Breast epithelium (tissue), 4 donors: ENCODE measurements at regions of chr3 and their contacts with region 1.

Region 1: DNA sequence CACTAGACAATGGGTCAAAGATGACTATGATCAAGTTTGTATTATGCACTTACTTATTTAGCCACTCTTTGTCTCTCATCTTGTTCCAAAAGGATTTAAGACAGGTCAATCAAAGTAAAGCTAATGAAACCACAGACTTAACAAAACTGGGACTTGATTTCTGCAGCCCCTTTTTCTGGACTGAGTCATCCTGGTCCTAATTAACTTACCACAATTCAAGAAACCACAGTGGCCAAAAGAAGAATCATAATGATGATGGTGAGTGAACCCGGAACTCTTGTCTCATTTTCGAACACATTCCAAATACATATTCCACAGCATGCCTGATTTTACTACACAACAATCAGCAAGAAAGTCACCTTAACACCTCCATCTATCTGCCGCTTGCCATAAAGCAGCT is 1333.0 kb downstream of the ROBO1 start:
- DNase-seq: no peak
- H3K4me3 ChIP-seq: no peak overlapping the region
- H3K27ac ChIP-seq: no peak overlapping the region
- H3K4me1 ChIP-seq: no peaks in the 10 kb centered on the region
- H3K27me3 ChIP-seq: no peaks in the 10 kb centered on the region
- CTCF ChIP-seq: no peak
- POLR2A ChIP-seq: no peak

Region 2: DNA sequence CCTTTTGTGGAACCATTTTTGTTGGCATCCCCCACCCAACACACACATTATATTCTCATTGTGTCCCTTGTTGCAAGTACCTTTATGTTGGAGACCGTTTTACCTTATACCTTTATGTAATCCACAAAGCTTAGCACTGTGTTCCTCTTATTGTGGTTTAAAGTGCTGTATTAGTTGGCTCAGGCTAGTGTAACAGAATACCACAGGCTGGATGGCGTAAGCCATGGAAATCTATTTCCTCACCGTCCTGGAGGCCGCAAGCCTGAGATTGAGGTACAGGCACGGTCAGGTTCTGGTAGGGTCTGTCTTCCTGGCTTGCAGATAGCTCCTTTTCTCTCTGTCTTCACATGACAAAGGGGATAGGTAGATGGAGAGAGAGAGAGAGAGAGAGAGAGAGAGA is 1092.1 kb before region 1 on chr3:
- intact Hi-C with region 1: no loop called
- DNase-seq: no peak
- H3K4me3 ChIP-seq: no peak overlapping the region
- H3K27ac ChIP-seq: no peak overlapping the region
- H3K4me1 ChIP-seq: no peaks in the 10 kb centered on the region
- H3K27me3 ChIP-seq: no peaks in the 10 kb centered on the region
- CTCF ChIP-seq: no peak
- POLR2A ChIP-seq: no peak

Region 3: DNA sequence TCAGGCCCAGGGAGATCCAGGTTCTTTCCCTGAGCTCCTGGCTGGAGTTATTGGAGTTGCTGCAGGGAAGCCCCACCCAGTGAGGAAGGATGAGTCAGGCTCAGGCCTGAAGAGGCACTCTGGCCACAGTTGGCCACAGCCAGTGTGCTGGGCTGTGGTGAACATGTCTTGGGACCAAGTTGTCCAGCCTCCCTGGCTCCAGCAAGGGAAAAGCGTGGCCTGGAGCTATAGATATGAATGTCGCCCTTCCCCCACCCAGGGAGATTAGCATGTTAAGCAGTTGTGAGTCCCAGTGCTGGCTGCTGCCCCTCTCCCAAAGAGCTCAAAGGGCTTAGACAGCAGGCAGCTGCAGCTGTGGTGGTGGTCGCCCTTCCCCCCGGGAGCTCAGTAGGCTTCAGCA is 431.7 kb before region 1 on chr3:
- intact Hi-C with region 1: loop called (anchors 10 kb)
- DNase-seq: no peak
- H3K4me3 ChIP-seq: no peak overlapping the region
- H3K27ac ChIP-seq: no peak overlapping the region
- H3K4me1 ChIP-seq: no peaks in the 10 kb centered on the region
- H3K27me3 ChIP-seq: no peaks in the 10 kb centered on the region
- CTCF ChIP-seq: no peak
- POLR2A ChIP-seq: no peak